ENCODE measurements at regions of chr1 and their contacts with region 1.

Region 1: DNA sequence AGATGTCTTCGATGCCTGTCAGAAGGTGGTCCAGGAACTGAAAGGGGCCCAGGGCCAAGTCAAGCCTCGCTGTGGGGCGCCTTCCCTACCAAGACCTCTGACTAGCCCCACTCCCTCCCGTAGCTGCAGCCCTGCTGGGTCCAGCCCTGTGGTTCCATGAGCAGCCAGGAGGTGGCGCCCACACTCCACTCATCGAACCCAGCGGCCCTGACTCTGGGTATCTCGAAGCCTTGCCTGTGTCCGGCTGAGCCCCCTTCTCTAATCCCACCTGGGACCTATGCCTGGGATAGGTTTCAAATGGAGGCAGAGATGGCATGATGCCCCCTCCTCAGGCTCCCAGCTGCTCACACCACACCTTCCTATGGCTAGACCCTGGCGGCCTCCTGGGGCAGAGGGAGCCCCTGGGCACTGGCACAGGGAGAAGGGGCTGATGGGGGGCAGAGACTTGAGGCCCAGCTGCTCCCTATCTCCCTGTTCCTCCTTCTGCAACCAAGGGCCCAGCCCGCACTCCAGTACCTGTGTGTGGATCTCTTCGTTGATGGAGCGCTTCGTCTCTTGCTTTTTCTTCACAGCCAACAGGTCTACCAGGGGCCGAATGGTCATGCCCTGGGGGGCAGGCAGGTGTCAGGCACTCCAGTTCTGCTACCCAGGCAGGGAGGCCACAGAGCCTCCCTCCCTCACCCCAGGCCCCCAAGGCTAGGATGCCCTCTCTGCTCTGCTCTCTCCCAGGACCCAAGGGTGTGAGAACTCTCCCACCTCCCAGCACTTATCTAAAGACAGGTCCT is 52.0 kb downstream of the SLC9A1 start:
- DNase-seq: peak; percentile 84 to 90
- H3K4me3 ChIP-seq: no peak overlapping the region
- H3K27ac ChIP-seq: peak overlapping the region in 1 of 5 donors; percentile 20
- H3K4me1 ChIP-seq: peaks cover 23 to 61% (median 36%) of the 10 kb centered on the region in 4 donors
- H3K27me3 ChIP-seq: no peaks in the 10 kb centered on the region
- CTCF ChIP-seq: peak in 5 of 7 experiments; percentile 94 to 99 (median 96)
- EP300 ChIP-seq: no peak
- POLR2A ChIP-seq: no peak

Region 2: DNA sequence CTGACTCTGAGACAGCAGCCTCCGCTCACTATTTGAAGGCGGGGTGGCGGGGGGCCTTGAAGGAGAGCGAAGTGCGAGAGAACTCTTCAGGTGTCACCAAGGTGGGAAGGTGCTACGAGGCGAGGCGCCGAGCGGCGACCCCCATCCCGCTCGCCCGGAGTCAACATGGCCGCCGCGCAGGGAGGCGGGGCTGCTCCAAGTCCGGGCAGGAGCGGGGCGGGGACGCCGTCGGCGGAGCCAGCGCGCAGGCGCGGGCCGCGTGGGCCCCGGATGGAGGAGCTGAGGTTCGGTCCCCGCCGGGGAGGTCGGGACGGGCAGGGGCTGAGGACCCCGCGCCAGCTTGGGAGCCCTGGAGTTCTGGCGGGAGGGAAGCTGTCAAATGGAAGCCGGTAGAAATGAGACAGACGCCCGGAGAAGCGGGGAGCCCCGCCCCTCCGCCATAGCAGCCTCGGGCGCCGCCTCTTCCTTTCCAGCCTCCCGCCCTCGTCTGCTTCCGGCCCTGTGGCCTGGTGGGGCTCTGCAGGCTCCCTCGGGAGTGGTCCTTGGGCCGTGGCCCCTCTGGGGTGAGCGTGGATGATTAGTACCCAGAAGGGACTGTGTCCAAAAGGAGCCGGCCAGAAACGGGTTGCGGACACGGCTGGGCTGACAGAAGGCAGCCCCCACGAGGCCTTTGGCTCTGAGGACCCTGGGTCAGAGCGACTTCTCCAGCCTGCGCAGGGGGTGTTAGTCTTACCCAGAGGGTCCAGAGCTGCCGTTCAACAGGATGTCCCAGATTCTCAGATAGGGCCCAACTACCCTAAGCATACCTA is 315.0 kb before region 1 on chr1 and contains the start of gene PIGV:
- intact Hi-C with region 1: no loop called
- DNase-seq: peak; percentile 89 to 96
- H3K4me3 ChIP-seq: peak within 1 kb of the TSS; percentile 62 to 80 (median 72)
- H3K27ac ChIP-seq: peak within 1 kb of the TSS; percentile 97 to 100 (median 98)
- H3K4me1 ChIP-seq: peaks cover 43 to 76% (median 60%) of the 10 kb centered on the region in 4 donors
- H3K27me3 ChIP-seq: no peaks in the 10 kb centered on the region
- CTCF ChIP-seq: peak in 4 of 7 experiments; percentile 12 to 50 (median 29)
- EP300 ChIP-seq: no peak
- POLR2A ChIP-seq: peak in 1 of 4 donors; percentile 50
- total RNA-seq, gene PIGV: 0.87 to 30.8 (median 8.7) TPM in 4 of 5 donors, not detected in the other

Region 3: DNA sequence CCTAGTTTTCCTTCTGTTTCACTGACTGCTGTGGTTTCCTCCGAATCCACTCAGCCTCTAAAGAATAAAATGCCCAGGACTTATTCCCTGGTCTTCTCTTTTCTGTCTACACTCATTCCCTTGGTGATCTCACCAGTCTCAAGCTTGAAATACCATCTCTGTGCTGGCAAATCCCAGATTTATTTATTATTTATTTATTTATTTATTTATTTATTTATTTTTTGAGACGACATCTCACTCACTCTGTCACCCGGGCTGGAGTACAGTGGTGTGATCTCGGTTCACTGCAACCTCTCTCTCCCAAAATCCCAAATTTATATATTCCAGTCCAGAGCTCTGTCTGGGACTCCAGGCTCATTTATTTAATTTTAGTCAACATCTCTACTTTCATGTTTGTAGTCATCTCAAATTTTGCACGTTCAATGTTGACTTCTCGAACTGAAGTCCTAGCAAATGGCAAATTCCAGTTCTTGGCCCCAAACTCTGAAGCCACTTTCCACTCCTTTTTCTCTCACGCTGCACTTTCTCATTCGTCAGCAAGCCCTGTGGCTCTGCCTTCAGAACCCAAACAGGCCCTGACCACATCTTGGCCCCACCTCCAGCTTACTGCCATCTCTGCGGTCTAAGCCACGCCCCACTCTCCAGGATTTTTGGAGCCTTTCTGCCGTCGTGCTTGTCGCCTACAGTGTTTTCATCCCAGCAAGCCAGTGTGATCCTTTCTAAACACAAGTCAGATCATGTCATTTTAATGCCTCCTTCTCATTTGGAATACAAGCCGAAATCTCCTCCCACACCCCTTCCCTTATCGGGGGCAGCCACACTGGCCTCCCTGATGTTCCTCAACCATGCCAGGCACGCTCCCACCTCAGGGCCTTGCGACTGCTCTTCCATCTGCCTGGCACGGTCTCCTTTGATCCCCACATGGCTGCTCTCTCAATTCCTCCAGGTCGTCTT is 76.0 kb before region 1 on chr1:
- intact Hi-C with region 1: no loop called
- DNase-seq: peak; percentile 75 to 84
- H3K4me3 ChIP-seq: no peak overlapping the region
- H3K27ac ChIP-seq: peak overlapping the region; percentile 58 to 85 (median 80)
- H3K4me1 ChIP-seq: peaks cover 29 to 39% (median 32%) of the 10 kb centered on the region in 4 donors
- H3K27me3 ChIP-seq: no peaks in the 10 kb centered on the region
- CTCF ChIP-seq: no peak
- EP300 ChIP-seq: no peak
- POLR2A ChIP-seq: no peak

Region 4: DNA sequence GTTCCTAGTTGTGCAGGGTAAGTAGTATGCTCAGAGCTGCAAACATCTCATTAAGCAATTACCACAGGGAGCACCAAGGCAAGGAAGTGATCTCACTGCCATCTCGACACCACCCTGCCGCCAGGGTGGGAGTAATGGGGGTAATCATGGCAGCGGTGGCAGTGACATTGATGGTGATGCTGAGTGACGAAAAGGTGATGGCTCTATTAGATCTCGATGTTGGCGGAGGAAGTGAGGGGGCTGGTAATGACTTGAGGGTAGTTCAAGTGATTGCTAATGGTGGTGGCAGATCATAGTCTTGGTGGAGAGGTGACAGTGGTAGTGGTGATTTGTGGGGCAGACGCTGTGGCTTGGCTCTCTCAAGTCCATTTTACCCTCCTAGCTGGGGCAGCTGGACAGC is 64.9 kb before region 1 on chr1:
- intact Hi-C with region 1: no loop called
- DNase-seq: no peak
- H3K4me3 ChIP-seq: no peak overlapping the region
- H3K27ac ChIP-seq: no peak overlapping the region
- H3K4me1 ChIP-seq: peaks cover under 1 to 7% (median 6%) of the 10 kb centered on the region in 4 donors
- H3K27me3 ChIP-seq: no peaks in the 10 kb centered on the region
- CTCF ChIP-seq: no peak
- EP300 ChIP-seq: no peak
- POLR2A ChIP-seq: no peak

Region 5: GRCh38 chr1:27192039-27192529 is 89.2 kb after region 1 on chr1:
- intact Hi-C with region 1: loop called (anchors 10 kb)
- DNase-seq: peak; percentile 40 to 86
- H3K4me3 ChIP-seq: no peak overlapping the region
- H3K27ac ChIP-seq: peak overlapping the region; percentile 63 to 82 (median 80)
- H3K4me1 ChIP-seq: peaks cover 0 to 8% (median 3%) of the 10 kb centered on the region in 4 donors
- H3K27me3 ChIP-seq: no peaks in the 10 kb centered on the region
- CTCF ChIP-seq: no peak
- EP300 ChIP-seq: no peak
- POLR2A ChIP-seq: no peak

Region 6: DNA sequence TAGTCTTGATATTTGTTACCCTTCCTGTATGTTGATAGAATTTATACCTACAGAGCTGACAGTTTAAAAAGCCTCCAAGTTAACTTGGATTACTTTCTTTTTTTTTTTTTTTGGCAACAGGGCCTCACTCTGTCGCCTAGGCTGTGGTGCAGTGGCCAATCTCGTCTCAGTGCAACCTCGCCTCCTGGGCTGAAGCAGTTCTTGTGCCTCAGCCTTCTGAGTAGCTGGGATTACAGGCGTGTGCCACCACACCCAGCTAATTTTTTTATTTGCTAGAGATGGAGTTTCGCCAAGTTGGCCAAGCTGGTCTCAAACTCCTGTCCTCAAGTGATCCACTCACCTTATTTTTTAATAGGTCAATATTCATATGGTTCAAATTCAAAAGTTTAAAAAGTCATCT is 164.3 kb after region 1 on chr1:
- intact Hi-C with region 1: no loop called
- DNase-seq: no peak
- H3K4me3 ChIP-seq: no peak overlapping the region
- H3K27ac ChIP-seq: no peak overlapping the region
- H3K4me1 ChIP-seq: no peaks in the 10 kb centered on the region
- H3K27me3 ChIP-seq: no peaks in the 10 kb centered on the region
- CTCF ChIP-seq: no peak
- EP300 ChIP-seq: no peak
- POLR2A ChIP-seq: no peak

Region 7: DNA sequence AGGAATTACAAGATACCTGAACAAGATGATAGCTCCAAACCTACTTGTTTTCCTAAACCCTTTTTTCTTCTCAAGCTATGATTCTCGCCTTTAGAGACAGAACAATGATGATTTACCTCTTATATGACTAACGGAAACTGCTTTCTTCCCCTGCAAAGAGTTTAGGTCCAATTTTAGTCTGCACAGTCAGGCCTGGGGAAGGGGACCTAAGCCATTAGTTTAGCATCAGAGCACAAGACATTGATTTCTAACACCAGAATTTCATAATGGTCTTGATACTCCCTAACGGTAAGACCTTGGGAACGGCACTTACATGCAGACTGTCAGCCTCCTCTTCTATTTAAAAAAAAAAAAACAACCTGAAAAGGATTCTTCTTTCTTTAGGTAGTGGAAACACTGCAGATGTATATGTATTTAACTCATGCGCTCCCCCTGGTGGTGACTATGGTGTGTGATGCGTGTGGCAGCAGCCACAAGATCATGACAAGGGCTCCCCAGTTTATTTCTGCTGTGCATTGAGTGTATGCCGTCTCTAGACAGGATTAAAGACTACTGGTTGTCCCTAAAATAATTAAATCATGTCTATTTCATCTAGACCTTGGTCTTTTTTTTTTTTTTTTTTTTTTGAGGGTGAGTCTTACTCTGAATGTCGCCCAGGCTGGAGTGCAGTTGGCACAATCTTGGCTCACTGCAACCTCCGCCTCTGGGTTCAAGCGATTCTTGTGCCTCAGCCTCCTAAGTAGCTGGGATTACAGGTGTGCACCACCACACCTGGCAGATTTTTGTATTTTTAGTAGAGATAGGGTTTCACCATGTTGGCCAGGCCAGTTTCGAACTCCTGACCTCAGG is 181.8 kb after region 1 on chr1:
- intact Hi-C with region 1: loop called (anchors 5 kb)
- DNase-seq: peak; percentile 91 to 94
- H3K4me3 ChIP-seq: no peak overlapping the region
- H3K27ac ChIP-seq: no peak overlapping the region
- H3K4me1 ChIP-seq: no peaks in the 10 kb centered on the region
- H3K27me3 ChIP-seq: no peaks in the 10 kb centered on the region
- CTCF ChIP-seq: peak in 5 of 7 experiments; percentile 77 to 86 (median 79)
- EP300 ChIP-seq: no peak
- POLR2A ChIP-seq: no peak

Measured in stomach (tissue), 19 donors.